Endothelial cell of umbilical vein (primary cell): ENCODE measurements at regions of chr22 and their contacts with region 1.

Region 1: DNA sequence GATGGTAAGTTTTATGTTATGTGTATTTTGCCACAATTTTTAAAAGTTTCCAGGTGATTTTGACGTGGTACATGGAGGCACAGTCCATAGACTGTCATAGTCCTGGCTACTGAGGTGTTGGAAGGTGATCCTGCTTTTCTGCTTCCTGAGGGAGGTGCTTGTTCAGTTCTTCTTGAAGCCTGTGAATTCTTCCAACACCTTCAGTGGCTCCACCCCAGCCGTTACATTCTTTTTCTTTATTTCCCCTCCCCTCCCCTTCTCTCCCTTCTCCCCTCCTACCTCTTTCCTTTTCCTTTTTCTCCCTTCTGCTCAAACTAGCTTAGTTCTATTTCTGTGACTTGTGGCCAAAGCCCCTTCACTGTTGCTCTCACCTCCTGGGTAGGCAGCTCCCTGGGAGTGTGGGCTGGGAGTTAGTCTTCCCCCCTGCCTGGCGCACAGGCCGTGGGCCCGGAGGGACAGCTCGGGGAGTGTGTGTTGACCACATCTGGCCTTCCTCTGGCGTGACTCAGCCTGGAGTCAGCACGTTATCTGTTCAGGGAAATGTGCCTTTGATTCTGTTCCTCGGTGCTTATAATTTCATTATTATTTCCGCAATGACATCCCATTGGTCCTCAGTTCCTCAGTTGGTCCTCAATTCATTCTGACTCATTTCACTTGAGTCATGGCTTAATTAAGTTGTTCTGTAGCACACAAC is 566.2 kb downstream of the TBC1D22A start:
- DNase-seq: peak; percentile 87
- H3K4me3 ChIP-seq: no peak overlapping the region
- H3K27ac ChIP-seq: no peak overlapping the region
- H3K4me1 ChIP-seq: peaks cover 15% of the 10 kb centered on the region
- H3K27me3 ChIP-seq: no peaks in the 10 kb centered on the region
- CTCF ChIP-seq: no peak
- POLR2A ChIP-seq: no peak

Region 2: GRCh38 chr22:47315862-47316419 is 12.8 kb before region 1 on chr22:
- CTCF ChIA-PET with region 1: no interaction called
- POLR2A ChIA-PET with region 1: no interaction called
- dilution Hi-C with region 1: no loop called
- intact Hi-C with region 1: loop called (anchors 1 kb)
- DNase-seq: no peak
- H3K4me3 ChIP-seq: no peak overlapping the region
- H3K27ac ChIP-seq: no peak overlapping the region
- H3K4me1 ChIP-seq: peaks cover 16% of the 10 kb centered on the region
- H3K27me3 ChIP-seq: no peaks in the 10 kb centered on the region
- CTCF ChIP-seq: no peak
- POLR2A ChIP-seq: no peak

Region 3: DNA sequence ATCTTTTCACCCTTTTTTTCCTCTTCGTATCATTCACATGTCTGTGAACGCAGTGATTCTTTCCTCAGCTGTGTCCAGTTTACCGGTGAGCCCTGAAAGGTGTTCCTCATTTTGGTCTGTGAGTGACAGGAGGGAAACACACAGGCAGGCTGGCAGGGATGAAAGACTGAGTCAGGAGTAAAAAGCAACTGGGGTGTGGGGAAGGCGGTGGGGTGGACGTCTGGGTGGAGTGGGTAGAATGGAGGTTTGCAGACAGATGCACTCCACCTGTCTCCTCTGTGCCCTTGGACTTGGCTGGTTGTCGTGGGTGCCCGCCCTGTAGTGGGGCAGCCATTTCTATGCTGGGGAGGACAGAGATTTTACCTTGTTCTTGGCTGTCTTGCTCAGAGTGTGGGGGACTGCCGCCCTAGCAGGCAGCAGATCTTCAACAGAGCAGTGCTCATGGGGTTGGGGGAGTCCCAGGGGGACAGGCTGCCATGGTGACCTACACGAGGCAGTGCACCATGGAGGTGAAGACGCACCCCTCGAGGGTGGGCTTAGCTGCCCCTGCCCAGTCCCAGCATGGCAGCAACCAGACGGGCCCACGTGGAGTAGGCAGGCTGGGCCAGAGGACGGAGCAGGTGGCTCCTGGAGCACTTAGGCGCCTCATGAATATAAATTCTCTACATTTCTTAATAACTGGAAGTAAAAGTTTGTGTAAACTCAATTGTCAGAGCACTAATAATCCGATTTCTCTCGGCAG is 37.5 kb after region 1 on chr22:
- CTCF ChIA-PET with region 1: no interaction called
- POLR2A ChIA-PET with region 1: no interaction called
- dilution Hi-C with region 1: no loop called
- intact Hi-C with region 1: no loop called
- DNase-seq: no peak
- H3K4me3 ChIP-seq: no peak overlapping the region
- H3K27ac ChIP-seq: no peak overlapping the region
- H3K4me1 ChIP-seq: no peaks in the 10 kb centered on the region
- H3K27me3 ChIP-seq: no peaks in the 10 kb centered on the region
- CTCF ChIP-seq: no peak
- POLR2A ChIP-seq: no peak